GM12878 (cell line): ENCODE measurements at regions of chr5 and their contacts with region 1.

Region 1: DNA sequence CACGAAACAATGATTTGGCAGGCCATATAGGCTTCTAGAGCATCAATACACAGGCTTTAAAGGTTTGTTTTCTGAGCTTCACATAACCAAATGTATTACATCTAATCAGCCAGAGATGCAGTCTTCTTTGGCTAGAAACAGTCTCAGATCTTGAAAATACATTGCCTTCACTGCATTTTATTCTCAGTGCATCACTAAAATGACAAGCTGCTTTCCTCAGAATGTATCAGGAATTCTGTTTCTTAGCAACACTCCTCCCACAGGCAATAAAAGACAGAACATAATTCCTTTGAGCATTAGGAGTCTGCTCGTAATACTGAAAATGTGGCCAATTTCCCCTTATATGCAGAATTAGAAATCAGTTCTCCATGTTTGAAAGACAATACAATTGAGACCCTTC is 36.9 kb downstream of the FEM1C start:
- DNase-seq: no peak
- ATAC-seq: no peak
- H3K4me3 ChIP-seq: no peak overlapping the region
- H3K27ac ChIP-seq: no peak overlapping the region
- H3K4me1 ChIP-seq: no peaks in the 10 kb centered on the region
- H3K27me3 ChIP-seq: no peaks in the 10 kb centered on the region
- CTCF ChIP-seq: no peak
- EP300 ChIP-seq: no peak
- POLR2A ChIP-seq: no peak
- RAD21 ChIP-seq: no peak

Region 2: GRCh38 chr5:115522832-115523403 is 15.2 kb after region 1 on chr5:
- CTCF ChIA-PET with region 1: interaction called, 7 read pairs
- POLR2A ChIA-PET with region 1: interaction called, 6 read pairs
- RAD21 ChIA-PET with region 1: no interaction called
- SMC1A ChIA-PET with region 1: interaction called, 36 read pairs
- in situ Hi-C with region 1: no loop called
- intact Hi-C with region 1: no loop called
- DNase-seq: no peak
- ATAC-seq: peak; percentile 13; the same call in 2 of the 3 replicates
- H3K4me3 ChIP-seq: no peak overlapping the region
- H3K27ac ChIP-seq: no peak overlapping the region
- H3K4me1 ChIP-seq: no peaks in the 10 kb centered on the region
- H3K27me3 ChIP-seq: no peaks in the 10 kb centered on the region
- CTCF ChIP-seq: no peak
- EP300 ChIP-seq: no peak
- POLR2A ChIP-seq: no peak
- RAD21 ChIP-seq: no peak